ENCODE measurements at regions of chr13 and their contacts with region 1.

Region 1: GRCh38 chr13:67134417-67135129 is 95.6 kb downstream of the PCDH9 start:
- DNase-seq: no peak
- H3K4me3 ChIP-seq: peak overlapping the region; percentile 32 to 51 (median 41)
- H3K27ac ChIP-seq: peak overlapping the region; percentile 41 to 58 (median 46)
- H3K4me1 ChIP-seq: peaks cover 14 to 39% (median 27%) of the 10 kb centered on the region in 4 donors
- H3K27me3 ChIP-seq: no peaks in the 10 kb centered on the region
- CTCF ChIP-seq: no peak
- EP300 ChIP-seq: no peak
- POLR2A ChIP-seq: no peak

Region 2: GRCh38 chr13:66751691-66752090 is 382.9 kb before region 1 on chr13:
- intact Hi-C with region 1: no loop called
- DNase-seq: no peak
- H3K4me3 ChIP-seq: no peak overlapping the region
- H3K27ac ChIP-seq: no peak overlapping the region
- H3K4me1 ChIP-seq: no peaks in the 10 kb centered on the region
- H3K27me3 ChIP-seq: no peaks in the 10 kb centered on the region
- CTCF ChIP-seq: no peak
- EP300 ChIP-seq: no peak
- POLR2A ChIP-seq: no peak

Region 3: GRCh38 chr13:67229481-67230403 is 95.2 kb after region 1 on chr13 and contains the start of gene PCDH9:
- intact Hi-C with region 1: loop called (anchors 5 kb)
- DNase-seq: no peak
- H3K4me3 ChIP-seq: peak within 1 kb of the TSS; percentile 72 to 89 (median 88)
- H3K27ac ChIP-seq: peak within 1 kb of the TSS; percentile 92 to 96 (median 95)
- H3K4me1 ChIP-seq: peaks cover 3 to 53% (median 52%) of the 10 kb centered on the region in 4 donors
- H3K27me3 ChIP-seq: no peaks in the 10 kb centered on the region
- CTCF ChIP-seq: no peak
- EP300 ChIP-seq: no peak
- POLR2A ChIP-seq: peak; percentile 71
- total RNA-seq, gene PCDH9: 33.8 to 81.8 (median 49.1) TPM

Region 4: DNA sequence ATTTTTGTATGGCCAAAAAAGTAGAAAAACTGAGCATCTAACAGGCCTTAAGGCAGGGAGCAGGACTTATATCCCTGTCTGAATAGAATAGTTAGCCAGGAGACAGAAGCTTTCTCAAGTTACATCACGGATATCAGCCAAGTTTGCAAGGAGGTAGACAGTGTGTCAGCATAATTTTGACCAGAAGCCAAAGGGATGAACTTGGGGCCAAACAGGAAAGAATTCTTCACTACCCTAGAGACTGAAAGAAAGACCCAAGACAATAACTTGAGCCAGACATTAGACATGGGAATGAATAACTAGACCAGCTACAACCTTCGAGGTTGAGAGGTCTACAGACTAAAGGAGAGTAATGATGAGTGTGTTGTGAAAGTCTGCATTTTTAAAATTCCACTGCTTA is 143.7 kb after region 1 on chr13:
- intact Hi-C with region 1: no loop called
- DNase-seq: no peak
- H3K4me3 ChIP-seq: no peak overlapping the region
- H3K27ac ChIP-seq: no peak overlapping the region
- H3K4me1 ChIP-seq: no peaks in the 10 kb centered on the region
- H3K27me3 ChIP-seq: no peaks in the 10 kb centered on the region
- CTCF ChIP-seq: no peak
- EP300 ChIP-seq: no peak
- POLR2A ChIP-seq: no peak